Panc1 (cell line): ENCODE measurements at regions of chr16 and their contacts with region 1.

Region 1: GRCh38 chr16:69469807-69470561 is 45.6 kb downstream of the CYB5B start:
- DNase-seq: no peak
- ATAC-seq: 0 out of 2 replicates have a peak, but pooled peaks have one; percentile 32
- H3K4me3 ChIP-seq: no peak overlapping the region
- H3K27ac ChIP-seq: peak overlapping the region; percentile 48
- H3K4me1 ChIP-seq: peaks cover 33% of the 10 kb centered on the region
- H3K27me3 ChIP-seq: no peaks in the 10 kb centered on the region
- CTCF ChIP-seq: no peak

Region 2: GRCh38 chr16:69424053-69424934 is 45.7 kb before region 1 on chr16 and contains the start of gene CYB5B:
- CTCF ChIA-PET with region 1: no interaction called
- POLR2A ChIA-PET with region 1: interaction called, 11 read pairs
- in situ Hi-C with region 1: no loop called
- intact Hi-C with region 1: no loop called
- DNase-seq: peak; percentile 94
- ATAC-seq: peak; percentile 95
- H3K4me3 ChIP-seq: peak within 1 kb of the TSS; percentile 83 to 87
- H3K27ac ChIP-seq: peak within 1 kb of the TSS; percentile 96
- H3K4me1 ChIP-seq: peaks cover 33% of the 10 kb centered on the region
- H3K27me3 ChIP-seq: no peaks in the 10 kb centered on the region
- CTCF ChIP-seq: no peak
- total RNA-seq, gene CYB5B: 326 TPM

Region 3: GRCh38 chr16:69565671-69566239 is 95.8 kb after region 1 on chr16 and contains the start of gene NFAT5:
- CTCF ChIA-PET with region 1: no interaction called
- POLR2A ChIA-PET with region 1: no interaction called
- in situ Hi-C with region 1: no loop called
- intact Hi-C with region 1: loop called (anchors 10 kb)
- DNase-seq: no peak
- ATAC-seq: peak; percentile 84
- H3K4me3 ChIP-seq: peak within 1 kb of the TSS; percentile 75 to 92
- H3K27ac ChIP-seq: peak within 1 kb of the TSS; percentile 99
- H3K4me1 ChIP-seq: peaks cover 14% of the 10 kb centered on the region
- H3K27me3 ChIP-seq: no peaks in the 10 kb centered on the region
- CTCF ChIP-seq: no peak
- total RNA-seq, gene NFAT5: 57.0 TPM